Panc1 (cell line): ENCODE measurements at regions of chr21 and their contacts with region 1.

Region 1: GRCh38 chr21:17679002-17679600 is 66.4 kb upstream of the BTG3 start:
- DNase-seq: peak; percentile 45
- ATAC-seq: peak; percentile 85; the same call in 1 of the 2 replicates
- H3K4me3 ChIP-seq: no peak overlapping the region
- H3K27ac ChIP-seq: no peak overlapping the region
- H3K4me1 ChIP-seq: no peaks in the 10 kb centered on the region
- H3K27me3 ChIP-seq: no peaks in the 10 kb centered on the region
- CTCF ChIP-seq: peak; percentile 70; the same call in 1 of the 2 replicates

Region 2: GRCh38 chr21:17903029-17903806 is 224.1 kb after region 1 on chr21:
- CTCF ChIA-PET with region 1: no interaction called
- POLR2A ChIA-PET with region 1: no interaction called
- in situ Hi-C with region 1: no loop called
- intact Hi-C with region 1: loop called (anchors 1 kb)
- DNase-seq: no peak
- ATAC-seq: peak; percentile 70; the same call in 1 of the 2 replicates
- H3K4me3 ChIP-seq: no peak overlapping the region
- H3K27ac ChIP-seq: no peak overlapping the region
- H3K4me1 ChIP-seq: peaks cover 9% of the 10 kb centered on the region
- H3K27me3 ChIP-seq: no peaks in the 10 kb centered on the region
- CTCF ChIP-seq: 0 out of 2 replicates have a peak, but pooled peaks have one; percentile 3

Region 3: GRCh38 chr21:17925000-17925610 is 246.0 kb after region 1 on chr21:
- CTCF ChIA-PET with region 1: interaction called, 5 read pairs
- POLR2A ChIA-PET with region 1: interaction called, 3 read pairs
- in situ Hi-C with region 1: no loop called
- intact Hi-C with region 1: loop called (anchors 5 kb)
- DNase-seq: peak; percentile 41
- ATAC-seq: peak; percentile 96
- H3K4me3 ChIP-seq: no peak overlapping the region
- H3K27ac ChIP-seq: no peak overlapping the region
- H3K4me1 ChIP-seq: no peaks in the 10 kb centered on the region
- H3K27me3 ChIP-seq: no peaks in the 10 kb centered on the region
- CTCF ChIP-seq: peak; percentile 83